CD4-positive, alpha-beta T cell (primary cell): ENCODE measurements at regions of chr17 and their contacts with region 1.

Region 1: DNA sequence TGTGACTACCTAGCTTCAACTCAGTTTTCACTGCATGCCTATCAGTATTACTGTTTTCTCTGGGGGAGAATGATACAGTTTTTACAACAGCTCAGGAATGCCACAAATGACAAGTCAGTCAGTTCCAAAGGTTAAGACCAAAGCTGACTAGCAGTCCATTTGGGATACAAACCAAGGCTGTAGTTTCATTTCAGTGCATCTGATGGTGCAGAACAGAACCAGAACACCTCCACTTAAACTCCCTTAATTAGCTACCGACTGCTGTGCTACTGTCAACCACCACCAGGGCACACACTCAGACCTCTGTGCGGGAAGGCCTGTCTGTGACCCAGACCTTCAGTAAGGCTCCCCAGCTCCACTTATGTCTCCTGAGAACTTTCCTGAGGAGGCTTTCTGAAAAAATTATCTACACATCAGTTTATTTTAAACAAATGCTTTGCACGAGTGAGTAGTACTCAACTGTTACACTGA is 20.4 kb downstream of the NFE2L1 start:
- DNase-seq: peak in 1 of 14 experiments; percentile 27
- ATAC-seq: peak; percentile 51
- H3K4me3 ChIP-seq: no peak overlapping the region
- H3K4me3 Mint-ChIP-seq: no peak overlapping the region
- H3K27ac ChIP-seq: no peak overlapping the region
- H3K27ac Mint-ChIP-seq: no peak overlapping the region
- H3K4me1 ChIP-seq: no peaks in the 10 kb centered on the region
- H3K4me1 Mint-ChIP-seq: no peaks in the 10 kb centered on the region
- H3K27me3 ChIP-seq: no peaks in the 10 kb centered on the region
- H3K27me3 Mint-ChIP-seq: no peaks in the 10 kb centered on the region
- CTCF ChIP-seq: no peak

Region 2: GRCh38 chr17:48483471-48484131 is 415.1 kb after region 1 on chr17:
- CTCF ChIA-PET with region 1: no interaction called
- POLR2A ChIA-PET with region 1: no interaction called
- intact Hi-C with region 1: loop called in 1 of 2 experiments (anchors 5 kb)
- DNase-seq: peak in 3 of 14 experiments; percentile 4 to 31 (median 30)
- ATAC-seq: peak; percentile 37
- H3K4me3 ChIP-seq: no peak overlapping the region
- H3K4me3 Mint-ChIP-seq: no peak overlapping the region
- H3K27ac ChIP-seq: no peak overlapping the region
- H3K27ac Mint-ChIP-seq: no peak overlapping the region
- H3K4me1 ChIP-seq: peaks cover 8% of the 10 kb centered on the region
- H3K4me1 Mint-ChIP-seq: peaks cover 6% of the 10 kb centered on the region
- H3K27me3 ChIP-seq: no peaks in the 10 kb centered on the region
- H3K27me3 Mint-ChIP-seq: peaks cover 10% of the 10 kb centered on the region
- CTCF ChIP-seq: no peak